ENCODE measurements at regions of chr18 and their contacts with region 1.

Region 1: DNA sequence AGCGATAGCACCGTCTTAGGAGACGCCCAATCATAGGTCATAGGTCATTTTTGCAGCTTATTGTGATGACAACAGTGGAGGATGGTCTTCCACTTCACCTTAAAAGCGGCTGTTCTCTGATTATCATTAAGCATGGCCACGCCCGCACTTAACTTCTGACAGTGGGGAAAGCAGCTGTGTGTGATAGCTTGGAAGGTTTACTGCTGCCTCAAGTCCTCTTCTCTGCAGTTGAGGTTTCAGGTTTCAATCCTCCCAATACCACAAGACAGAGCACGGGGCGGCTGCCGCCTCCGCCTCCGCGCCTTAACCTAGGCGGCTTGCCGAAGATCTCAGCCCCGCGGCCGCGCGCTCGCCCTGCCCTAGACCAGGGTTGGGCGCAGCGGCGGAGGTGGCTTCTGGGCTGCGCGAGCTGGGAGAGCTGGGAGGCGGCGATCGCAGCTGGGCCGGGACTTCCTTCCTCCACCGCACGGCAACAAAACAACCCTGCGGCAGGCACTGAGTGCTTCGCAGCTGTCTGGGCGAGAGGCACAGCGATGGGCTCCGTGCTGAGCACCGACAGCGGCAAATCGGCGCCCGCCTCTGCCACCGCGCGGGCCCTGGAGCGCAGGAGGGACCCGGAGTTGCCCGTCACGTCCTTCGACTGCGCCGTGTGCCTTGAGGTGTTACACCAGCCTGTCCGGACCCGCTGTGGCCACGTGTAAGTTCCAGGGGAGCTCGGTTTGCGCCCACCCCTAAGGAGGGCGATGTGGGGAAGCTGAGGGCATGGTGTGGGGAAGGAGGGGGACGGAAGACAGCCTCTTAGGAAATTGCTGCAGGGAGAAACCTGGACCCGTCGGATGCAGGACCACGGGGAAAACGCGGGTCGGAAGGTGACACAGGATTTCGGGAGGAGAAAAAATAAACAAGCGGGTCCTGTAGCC is at the start of gene RNF125:
- DNase-seq: peak; percentile 83 to 97 (median 95)
- ATAC-seq: peak; percentile 87
- H3K4me3 ChIP-seq: peak within 1 kb of the TSS; percentile 89
- H3K4me3 Mint-ChIP-seq: peak within 1 kb of the TSS; percentile 87 to 99 (median 96)
- H3K27ac ChIP-seq: peak within 1 kb of the TSS; percentile 87
- H3K27ac Mint-ChIP-seq: peak within 1 kb of the TSS; percentile 87 to 99 (median 96)
- H3K4me1 ChIP-seq: peaks cover 34% of the 10 kb centered on the region in 2 donors
- H3K4me1 Mint-ChIP-seq: peaks cover 36 to 72% (median 57%) of the 10 kb centered on the region in 7 donors
- H3K27me3 ChIP-seq: no peaks in the 10 kb centered on the region
- H3K27me3 Mint-ChIP-seq: peaks cover 0 to 5% (median 0%) of the 10 kb centered on the region in 5 donors
- total RNA-seq, gene RNF125: 30.3 to 59.8 (median 37.1) TPM

Region 2: DNA sequence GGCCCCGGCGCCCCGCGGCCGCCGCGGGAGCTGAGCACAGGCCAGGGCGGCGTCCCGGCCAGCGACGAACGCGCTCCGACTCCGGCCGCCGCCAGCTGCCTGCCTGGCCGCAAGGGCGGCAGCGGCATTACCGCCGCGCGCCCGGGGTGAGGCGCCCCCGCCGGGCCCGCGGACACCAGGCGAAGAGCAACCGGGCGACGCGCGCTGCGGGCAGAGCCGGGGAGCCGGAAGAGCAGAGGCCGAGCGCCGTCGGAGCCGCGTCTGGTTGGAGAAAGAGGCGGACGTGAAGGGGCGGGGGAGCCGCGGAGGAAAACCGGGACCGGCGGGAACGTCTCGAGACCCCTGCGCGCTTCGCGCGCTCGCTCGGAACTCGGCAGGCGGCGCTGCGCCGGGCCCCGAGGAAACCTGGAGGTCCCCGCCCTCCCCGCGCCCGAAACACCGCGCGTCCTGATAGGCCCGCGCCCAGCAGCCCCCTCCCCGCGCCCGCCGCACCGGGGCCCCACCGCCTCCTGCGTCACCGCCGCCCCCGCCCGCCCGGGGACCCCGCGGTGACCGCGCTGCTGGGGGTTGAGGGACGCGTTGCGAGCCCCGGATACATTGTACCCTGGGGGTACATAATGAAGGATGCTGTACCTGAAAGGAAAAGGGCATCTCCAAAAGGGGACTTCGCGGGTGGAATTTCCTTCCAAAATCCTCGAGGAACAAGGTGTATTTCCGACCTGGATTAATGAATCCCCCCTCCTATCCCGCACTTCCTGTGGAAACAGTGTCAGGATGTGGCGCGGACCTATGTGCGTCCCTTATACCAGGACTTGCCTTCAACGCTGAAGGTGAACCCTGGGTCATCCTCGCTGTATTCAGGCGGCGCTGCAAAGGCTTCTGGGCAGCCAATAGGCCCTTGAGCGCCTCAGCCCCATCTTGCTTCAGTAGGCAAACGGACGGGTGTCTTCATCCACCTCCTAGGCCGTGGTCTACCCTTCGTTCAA is 333.2 kb before region 1 on chr18:
- CTCF ChIA-PET with region 1: no interaction called
- POLR2A ChIA-PET with region 1: no interaction called
- intact Hi-C with region 1: no loop called
- DNase-seq: peak; percentile 14 to 64 (median 35)
- ATAC-seq: peak; percentile 82
- H3K4me3 ChIP-seq: peak overlapping the region; percentile 24
- H3K4me3 Mint-ChIP-seq: peak overlapping the region; percentile 80 to 90 (median 86)
- H3K27ac ChIP-seq: no peak overlapping the region
- H3K27ac Mint-ChIP-seq: peak overlapping the region in 5 of 9 donors; percentile 57 to 79 (median 67)
- H3K4me1 ChIP-seq: no peaks in the 10 kb centered on the region
- H3K4me1 Mint-ChIP-seq: peaks cover 8 to 18% (median 15%) of the 10 kb centered on the region in 7 donors
- H3K27me3 ChIP-seq: no peaks in the 10 kb centered on the region
- H3K27me3 Mint-ChIP-seq: peaks cover 13 to 63% (median 39%) of the 10 kb centered on the region in 5 donors

Region 3: GRCh38 chr18:31942999-31943865 is 75.4 kb before region 1 on chr18 and contains the start of gene TRAPPC8:
- CTCF ChIA-PET with region 1: interaction called, 13 read pairs
- POLR2A ChIA-PET with region 1: interaction called, 99 read pairs
- intact Hi-C with region 1: loop called (anchors 1 kb)
- DNase-seq: peak; percentile 81 to 94 (median 91)
- ATAC-seq: peak; percentile 91
- H3K4me3 ChIP-seq: peak within 1 kb of the TSS; percentile 98
- H3K4me3 Mint-ChIP-seq: peak within 1 kb of the TSS; percentile 95 to 100 (median 98)
- H3K27ac ChIP-seq: peak within 1 kb of the TSS; percentile 97
- H3K27ac Mint-ChIP-seq: peak within 1 kb of the TSS; percentile 95 to 100 (median 99)
- H3K4me1 ChIP-seq: peaks cover 17 to 26% of the 10 kb centered on the region in 2 donors
- H3K4me1 Mint-ChIP-seq: peaks cover 28 to 54% (median 44%) of the 10 kb centered on the region in 7 donors
- H3K27me3 ChIP-seq: no peaks in the 10 kb centered on the region
- H3K27me3 Mint-ChIP-seq: no peaks in the 10 kb centered on the region
- total RNA-seq, gene TRAPPC8: 31.0 to 62.7 (median 44.3) TPM

Region 4: DNA sequence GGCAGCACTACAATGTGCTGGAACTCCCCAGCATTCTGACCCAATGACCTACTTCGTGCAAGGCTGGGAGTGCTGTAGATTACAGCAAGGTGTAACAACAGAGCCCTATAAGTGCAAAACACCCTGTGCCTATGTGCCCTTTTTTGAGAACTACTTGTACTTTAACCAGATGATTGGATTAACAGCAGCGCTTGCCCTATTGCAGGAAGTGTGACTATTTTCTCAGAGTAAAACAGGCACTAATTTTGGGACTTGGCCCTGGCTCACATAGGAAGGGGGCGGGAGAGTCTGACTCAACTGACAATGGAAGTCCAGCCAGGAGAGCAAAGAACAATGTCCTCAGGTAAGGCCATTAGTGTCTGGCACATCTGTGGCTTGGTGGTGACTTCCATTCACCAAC is 35.6 kb before region 1 on chr18:
- CTCF ChIA-PET with region 1: interaction called, 3 read pairs
- POLR2A ChIA-PET with region 1: interaction called, 9 read pairs
- intact Hi-C with region 1: loop called (anchors 2 to 5 kb)
- DNase-seq: no peak
- ATAC-seq: no peak
- H3K4me3 ChIP-seq: no peak overlapping the region
- H3K4me3 Mint-ChIP-seq: peak overlapping the region in 2 of 10 donors; percentile 5 to 42
- H3K27ac ChIP-seq: no peak overlapping the region
- H3K27ac Mint-ChIP-seq: peak overlapping the region in 2 of 9 donors; percentile 21 to 43
- H3K4me1 ChIP-seq: peaks cover 12 to 21% of the 10 kb centered on the region in 2 donors
- H3K4me1 Mint-ChIP-seq: peaks cover 3 to 31% (median 20%) of the 10 kb centered on the region in 7 donors
- H3K27me3 ChIP-seq: no peaks in the 10 kb centered on the region
- H3K27me3 Mint-ChIP-seq: no peaks in the 10 kb centered on the region

Region 5: DNA sequence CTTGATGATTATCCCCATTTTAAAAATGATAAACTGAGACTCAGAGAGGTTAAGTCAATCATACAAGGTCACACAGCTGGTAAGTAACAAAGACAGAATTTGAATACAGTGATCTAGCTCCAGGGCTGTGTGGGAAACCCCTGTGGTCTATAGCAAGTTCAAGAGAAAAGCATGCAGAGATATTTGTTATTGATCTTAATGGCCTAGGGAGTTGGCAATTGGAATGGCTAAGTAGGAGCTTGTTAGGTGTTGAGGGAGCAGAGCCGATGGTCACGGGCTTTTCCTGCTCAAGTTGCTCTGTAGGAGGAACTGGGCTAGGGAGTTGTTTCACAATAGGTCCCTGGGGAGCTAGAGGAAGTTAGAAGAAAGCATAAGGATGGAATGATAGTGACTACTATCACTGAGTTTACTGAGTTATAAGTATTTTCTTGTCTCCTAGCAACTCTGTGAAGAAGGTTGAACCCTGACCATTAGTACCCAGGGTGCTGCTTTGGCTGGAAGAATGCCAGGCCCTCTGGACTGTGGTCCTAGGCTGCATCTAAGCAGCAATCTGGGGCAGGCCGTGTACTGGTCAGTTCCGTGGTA is 30.0 kb after region 1 on chr18:
- CTCF ChIA-PET with region 1: interaction called, 6 read pairs
- POLR2A ChIA-PET with region 1: interaction called, 21 read pairs
- intact Hi-C with region 1: loop called in 1 of 2 experiments (anchors 1 kb)
- DNase-seq: no peak
- ATAC-seq: peak; percentile 46
- H3K4me3 ChIP-seq: peak overlapping the region; percentile 12
- H3K4me3 Mint-ChIP-seq: peak overlapping the region in 9 of 10 donors; percentile 1 to 83 (median 36)
- H3K27ac ChIP-seq: peak overlapping the region; percentile 2
- H3K27ac Mint-ChIP-seq: peak overlapping the region in 8 of 9 donors; percentile 1 to 89 (median 58)
- H3K4me1 ChIP-seq: peaks cover 21% of the 10 kb centered on the region in 2 donors
- H3K4me1 Mint-ChIP-seq: peaks cover 22 to 54% (median 36%) of the 10 kb centered on the region in 7 donors
- H3K27me3 ChIP-seq: no peaks in the 10 kb centered on the region
- H3K27me3 Mint-ChIP-seq: no peaks in the 10 kb centered on the region

Region 6: GRCh38 chr18:32072321-32072720 is 53.7 kb after region 1 on chr18:
- CTCF ChIA-PET with region 1: interaction called, 18 read pairs
- POLR2A ChIA-PET with region 1: interaction called, 44 read pairs
- intact Hi-C with region 1: loop called (anchors 1 kb)
- DNase-seq: peak in 4 of 9 donors; percentile 34 to 55 (median 45)
- ATAC-seq: peak; percentile 67
- H3K4me3 ChIP-seq: no peak overlapping the region
- H3K4me3 Mint-ChIP-seq: no peak overlapping the region
- H3K27ac ChIP-seq: no peak overlapping the region
- H3K27ac Mint-ChIP-seq: peak overlapping the region in 4 of 9 donors; percentile 15 to 68 (median 30)
- H3K4me1 ChIP-seq: no peaks in the 10 kb centered on the region
- H3K4me1 Mint-ChIP-seq: peaks cover 0 to 30% (median 18%) of the 10 kb centered on the region in 7 donors
- H3K27me3 ChIP-seq: no peaks in the 10 kb centered on the region
- H3K27me3 Mint-ChIP-seq: no peaks in the 10 kb centered on the region

Region 7: GRCh38 chr18:32208023-32208422 is 189.4 kb after region 1 on chr18:
- CTCF ChIA-PET with region 1: no interaction called
- POLR2A ChIA-PET with region 1: no interaction called
- intact Hi-C with region 1: no loop called
- DNase-seq: no peak
- ATAC-seq: no peak
- H3K4me3 ChIP-seq: no peak overlapping the region
- H3K4me3 Mint-ChIP-seq: no peak overlapping the region
- H3K27ac ChIP-seq: no peak overlapping the region
- H3K27ac Mint-ChIP-seq: no peak overlapping the region
- H3K4me1 ChIP-seq: no peaks in the 10 kb centered on the region
- H3K4me1 Mint-ChIP-seq: no peaks in the 10 kb centered on the region
- H3K27me3 ChIP-seq: no peaks in the 10 kb centered on the region
- H3K27me3 Mint-ChIP-seq: peaks cover 0 to 3% (median 3%) of the 10 kb centered on the region in 5 donors

Region 8: DNA sequence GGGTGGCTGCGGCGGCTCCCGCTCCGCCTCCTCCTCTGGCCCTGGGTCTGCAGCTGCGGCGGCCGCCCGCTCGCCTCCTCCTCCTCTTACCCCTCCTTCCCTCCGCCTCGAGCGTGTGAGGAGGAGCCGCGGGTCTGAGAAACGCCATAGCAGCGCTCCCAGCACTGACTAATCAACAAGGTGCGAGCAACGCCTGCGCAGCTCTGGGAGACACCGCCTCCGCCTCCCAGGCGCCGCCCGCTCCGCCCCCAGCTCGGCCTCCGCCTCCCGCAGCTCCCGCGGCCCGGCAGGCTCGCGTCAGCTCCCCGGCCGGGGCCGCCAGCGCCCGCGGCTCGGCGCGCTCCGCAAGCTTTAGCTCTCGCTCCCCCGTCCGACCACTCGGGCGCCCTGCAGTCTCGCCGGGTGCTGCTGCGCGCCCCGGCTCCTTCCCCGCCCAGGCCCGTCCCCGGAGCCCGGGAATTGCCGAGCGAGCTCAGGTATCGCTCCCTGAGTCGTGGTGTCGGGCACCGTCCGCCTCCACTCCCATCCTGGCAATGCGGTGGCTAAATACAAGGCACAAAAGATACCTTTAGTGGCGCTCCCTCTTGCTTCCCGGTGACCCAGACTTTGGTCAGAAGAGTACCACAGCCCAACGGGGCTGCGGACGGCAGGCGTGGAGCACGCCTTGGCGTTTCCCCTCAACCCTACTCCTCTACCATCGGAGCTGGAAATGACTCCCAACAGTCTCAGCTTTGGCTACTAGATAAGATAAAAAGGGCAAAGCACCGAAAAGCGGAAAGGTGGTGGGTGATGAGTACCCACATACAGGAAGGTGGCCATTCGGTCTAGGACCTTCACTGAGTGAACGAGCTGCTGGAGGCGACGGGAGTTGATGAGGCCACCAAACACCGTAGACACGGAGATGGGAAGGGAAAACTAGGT is 452.4 kb after region 1 on chr18 and contains the start of gene GAREM1:
- CTCF ChIA-PET with region 1: no interaction called
- POLR2A ChIA-PET with region 1: interaction called, 3 read pairs
- intact Hi-C with region 1: loop called in 1 of 2 experiments (anchors 1 kb)
- DNase-seq: peak; percentile 67 to 82 (median 77)
- ATAC-seq: peak; percentile 95
- H3K4me3 ChIP-seq: peak within 1 kb of the TSS; percentile 58
- H3K4me3 Mint-ChIP-seq: peak within 1 kb of the TSS; percentile 78 to 91 (median 89)
- H3K27ac ChIP-seq: no peak within 1 kb of the TSS
- H3K27ac Mint-ChIP-seq: peak within 1 kb of the TSS in 7 of 9 donors; percentile 21 to 86 (median 56)
- H3K4me1 ChIP-seq: peaks cover 9 to 14% of the 10 kb centered on the region in 2 donors
- H3K4me1 Mint-ChIP-seq: peaks cover 12 to 33% (median 26%) of the 10 kb centered on the region in 7 donors
- H3K27me3 ChIP-seq: peaks cover 4 to 5% of the 10 kb centered on the region in 2 donors
- H3K27me3 Mint-ChIP-seq: peaks cover 28 to 79% (median 33%) of the 10 kb centered on the region in 5 donors
- total RNA-seq, gene GAREM1: 0.13 to 0.51 (median 0.43) TPM in 3 of 5 experiments, not detected in the others